ENCODE measurements at regions of chr1 and their contacts with region 1.

Region 1: DNA sequence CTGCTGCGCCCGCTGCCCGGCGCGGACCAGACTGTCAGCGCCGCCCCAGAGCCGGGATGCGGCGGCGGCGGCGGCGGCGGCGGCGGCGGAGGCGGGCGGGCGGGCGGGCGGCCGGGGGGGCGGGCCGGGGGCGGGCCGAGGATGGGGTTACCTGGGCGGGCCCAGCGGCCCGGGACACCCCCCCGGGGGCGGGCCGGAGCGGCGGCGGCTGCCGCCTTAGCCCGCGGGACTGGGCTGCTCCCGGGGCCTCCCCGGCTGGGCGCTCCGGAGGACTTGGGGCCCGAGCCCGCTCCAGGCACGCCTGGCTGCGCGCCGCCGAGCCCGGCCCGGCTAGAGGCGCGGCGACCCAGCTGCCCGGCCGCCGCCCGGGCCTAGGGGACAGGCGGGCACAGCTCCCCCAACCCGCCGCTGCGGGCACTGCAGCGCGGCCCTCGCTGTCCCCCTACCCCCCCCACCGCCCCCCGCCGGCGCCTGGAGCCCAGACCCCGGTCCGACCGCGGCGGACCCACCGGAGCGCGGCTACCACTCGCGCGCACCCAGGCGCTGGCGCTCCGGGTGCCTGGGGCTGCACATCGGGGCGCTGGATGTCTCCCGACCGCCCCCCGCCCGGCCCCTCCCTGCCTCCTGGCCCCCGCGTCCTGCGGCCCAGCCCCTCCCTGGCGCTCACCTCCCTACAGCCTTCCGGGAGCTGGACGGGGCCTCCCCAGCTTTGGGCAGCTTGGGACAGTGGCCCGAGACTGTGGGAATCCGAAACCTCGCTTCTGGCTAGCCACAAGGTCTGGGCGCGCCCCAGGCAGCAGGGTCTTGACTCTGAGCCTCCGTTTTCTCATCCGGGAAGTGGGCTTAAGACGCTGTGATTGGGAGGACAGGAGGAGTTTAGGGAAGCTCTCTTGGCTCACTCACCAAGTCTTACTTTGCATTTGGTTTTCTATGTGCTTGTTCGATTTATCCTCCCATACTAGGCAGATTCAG is at the start of gene WNT4:
- DNase-seq: peak; percentile 38 to 64
- ATAC-seq: peak; percentile 68 to 80 (median 74)
- H3K4me3 ChIP-seq: peak within 1 kb of the TSS; percentile 80
- H3K27ac ChIP-seq: peak within 1 kb of the TSS; percentile 74
- H3K4me1 ChIP-seq: peaks cover 15% of the 10 kb centered on the region
- H3K27me3 ChIP-seq: peaks cover 0 to 4% (median 0%) of the 10 kb centered on the region in 3 donors
- CTCF ChIP-seq: peak; percentile 51
- total RNA-seq, gene WNT4: 0.10 to 5.6 (median 0.64) TPM

Region 2: GRCh38 chr1:21919520-21919919 is 223.8 kb before region 1 on chr1:
- intact Hi-C with region 1: no loop called
- DNase-seq: no peak
- ATAC-seq: peak; percentile 20 to 41 (median 28)
- H3K4me3 ChIP-seq: no peak overlapping the region
- H3K27ac ChIP-seq: peak overlapping the region; percentile 52
- H3K4me1 ChIP-seq: peaks cover 52% of the 10 kb centered on the region
- H3K27me3 ChIP-seq: peaks cover 0 to 2% (median 0%) of the 10 kb centered on the region in 3 donors
- CTCF ChIP-seq: no peak

Region 3: DNA sequence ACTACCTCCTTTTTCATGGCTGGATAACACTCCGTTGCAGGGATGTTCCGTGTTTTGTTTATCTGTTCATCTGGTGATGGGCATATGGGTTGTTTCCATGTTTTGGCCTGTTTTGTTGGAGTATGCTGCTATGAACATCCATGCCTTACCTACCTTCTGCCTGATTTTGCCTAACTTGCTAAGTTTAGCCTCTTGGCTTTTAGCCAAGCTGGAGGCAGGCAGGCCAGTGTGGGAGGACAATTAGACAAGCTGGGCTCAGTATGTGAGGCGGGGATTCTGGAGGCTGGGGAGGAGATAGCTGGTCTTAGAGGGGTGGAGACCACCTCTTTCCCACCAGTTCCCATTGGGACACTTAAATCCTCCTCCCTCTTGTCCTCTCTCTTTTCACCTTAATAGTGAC is 97.9 kb after region 1 on chr1:
- intact Hi-C with region 1: loop called in 1 of 2 experiments (anchors 5 kb)
- DNase-seq: no peak
- ATAC-seq: no peak
- H3K4me3 ChIP-seq: no peak overlapping the region
- H3K27ac ChIP-seq: no peak overlapping the region
- H3K4me1 ChIP-seq: no peaks in the 10 kb centered on the region
- H3K27me3 ChIP-seq: no peaks in the 10 kb centered on the region
- CTCF ChIP-seq: no peak

Measured in psoas muscle (tissue), 8 donors.